ENCODE measurements at regions of chr3 and their contacts with region 1.

Region 1: GRCh38 chr3:105806361-105806760 is 62.5 kb downstream of the CBLB start:
- DNase-seq: no peak
- H3K4me3 Mint-ChIP-seq: no peak overlapping the region
- H3K27ac Mint-ChIP-seq: no peak overlapping the region
- H3K4me1 Mint-ChIP-seq: peaks cover 62% of the 10 kb centered on the region
- H3K27me3 Mint-ChIP-seq: no peaks in the 10 kb centered on the region

Region 2: DNA sequence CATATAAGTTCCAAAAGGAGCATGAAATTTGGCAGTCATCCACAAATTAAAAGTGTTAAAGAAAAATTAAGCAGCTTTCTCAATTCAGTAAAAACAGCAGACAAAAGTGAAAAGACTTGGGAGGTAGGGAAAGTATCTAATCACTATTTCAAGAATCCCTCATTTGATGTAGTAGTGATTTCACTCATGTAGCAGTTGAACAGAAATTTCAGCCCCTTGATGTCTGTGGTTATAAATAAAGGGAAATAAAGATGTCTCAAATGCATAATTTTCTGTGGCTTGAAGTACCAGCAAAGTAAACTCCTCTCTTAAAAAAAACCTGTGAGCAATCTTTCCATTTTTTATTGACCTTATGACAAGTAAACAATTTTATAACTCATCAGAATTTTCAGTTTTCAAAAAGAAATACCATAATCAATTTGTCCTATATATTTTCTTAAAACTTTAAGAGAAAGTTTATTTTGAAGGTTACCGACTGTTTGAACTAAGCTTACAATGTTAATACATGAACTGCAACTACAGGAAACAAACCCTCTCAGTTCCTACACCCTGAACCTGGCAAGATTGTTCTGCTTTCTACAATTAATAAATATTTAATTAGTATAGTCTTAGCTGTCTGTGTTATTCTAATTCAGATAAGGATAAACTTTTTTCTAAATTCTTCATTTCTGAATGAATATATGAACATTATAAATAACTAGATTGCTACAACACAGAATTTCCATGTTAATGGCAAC is 31.7 kb before region 1 on chr3:
- CTCF ChIA-PET with region 1: no interaction called
- intact Hi-C with region 1: loop called (anchors 1 kb)
- DNase-seq: no peak
- H3K4me3 Mint-ChIP-seq: no peak overlapping the region
- H3K27ac Mint-ChIP-seq: peak overlapping the region; percentile 26
- H3K4me1 Mint-ChIP-seq: peaks cover 74% of the 10 kb centered on the region
- H3K27me3 Mint-ChIP-seq: no peaks in the 10 kb centered on the region

Region 3: DNA sequence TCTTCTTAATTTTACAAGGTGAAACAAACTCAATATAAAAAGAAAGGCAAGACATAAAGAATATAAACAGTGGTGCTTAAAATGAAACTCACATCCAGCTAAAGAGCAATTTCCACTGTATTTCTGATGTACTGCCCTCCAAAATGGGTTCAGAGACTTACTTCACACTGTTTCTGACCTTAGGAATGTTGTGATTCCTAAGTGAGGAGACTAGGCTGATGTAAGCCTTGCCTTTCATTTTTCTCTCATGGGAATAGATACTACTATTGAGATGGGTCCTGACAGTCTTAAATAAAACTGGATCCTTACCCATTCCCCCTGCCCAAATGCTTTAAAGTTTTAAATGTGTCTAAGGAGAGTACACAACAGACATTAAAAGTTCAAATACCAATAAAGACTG is 24.5 kb before region 1 on chr3:
- CTCF ChIA-PET with region 1: no interaction called
- intact Hi-C with region 1: loop called (anchors 1 kb)
- DNase-seq: no peak
- H3K4me3 Mint-ChIP-seq: no peak overlapping the region
- H3K27ac Mint-ChIP-seq: peak overlapping the region; percentile 51
- H3K4me1 Mint-ChIP-seq: peaks cover 65% of the 10 kb centered on the region
- H3K27me3 Mint-ChIP-seq: no peaks in the 10 kb centered on the region